Activated naive CD4-positive, alpha-beta T cell treated with anti-CD3 and anti-CD28 coated beads for 36 hours (primary cell): ENCODE measurements at regions of chr6 and their contacts with region 1.

Region 1: GRCh38 chr6:111259089-111259831 is 172.0 kb downstream of the SLC16A10 start:
- DNase-seq: peak; percentile 99
- H3K4me3 Mint-ChIP-seq: peak overlapping the region; percentile 77
- H3K27ac Mint-ChIP-seq: peak overlapping the region; percentile 79
- H3K4me1 Mint-ChIP-seq: peaks cover 34% of the 10 kb centered on the region
- H3K27me3 Mint-ChIP-seq: no peaks in the 10 kb centered on the region

Region 2: DNA sequence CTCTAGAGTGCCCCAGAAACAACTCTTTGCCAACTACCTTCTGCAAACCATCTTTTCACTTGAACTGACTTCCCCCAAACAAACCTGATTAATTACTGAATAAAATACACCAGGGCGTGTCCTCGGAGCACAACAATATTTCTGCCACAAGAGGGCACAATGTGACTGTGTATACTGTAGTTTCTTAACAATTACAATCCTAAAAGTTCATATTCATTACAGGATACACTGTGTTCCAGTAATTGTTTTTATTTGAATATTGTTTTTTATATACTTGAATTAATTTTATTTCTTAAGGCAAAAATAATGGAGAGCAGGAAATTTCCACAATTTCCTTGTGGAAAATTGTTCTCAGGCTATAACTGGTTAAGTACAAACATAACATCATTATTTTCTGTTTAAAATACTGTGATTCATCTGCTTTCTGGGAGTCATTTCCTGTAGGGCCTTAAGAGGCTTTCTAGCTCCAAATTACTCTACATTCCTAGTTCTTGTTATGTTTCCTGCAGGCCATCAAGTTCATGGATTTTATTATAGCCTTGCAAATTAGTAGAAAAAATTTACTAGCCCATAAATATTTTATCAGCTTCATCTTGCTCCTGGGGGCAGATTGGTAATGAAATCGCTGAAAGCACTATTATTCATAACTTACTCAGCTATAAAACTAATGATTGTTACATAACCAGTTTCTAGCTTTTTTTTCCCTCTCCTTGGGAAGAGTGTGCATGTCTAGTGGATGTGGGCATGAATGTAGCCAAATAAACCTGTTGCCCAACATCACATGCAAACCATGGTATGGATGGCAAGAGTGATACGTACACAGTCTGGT is 730.9 kb before region 1 on chr6:
- CTCF ChIA-PET with region 1: no interaction called
- intact Hi-C with region 1: loop called (anchors 2 kb)
- DNase-seq: peak; percentile 75
- H3K4me3 Mint-ChIP-seq: no peak overlapping the region
- H3K27ac Mint-ChIP-seq: no peak overlapping the region
- H3K4me1 Mint-ChIP-seq: no peaks in the 10 kb centered on the region
- H3K27me3 Mint-ChIP-seq: no peaks in the 10 kb centered on the region

Region 3: GRCh38 chr6:111087106-111087835 is 172.0 kb before region 1 on chr6 and contains the start of gene SLC16A10:
- CTCF ChIA-PET with region 1: interaction called, 3 read pairs
- intact Hi-C with region 1: loop called (anchors 1 kb)
- DNase-seq: peak; percentile 74
- H3K4me3 Mint-ChIP-seq: peak within 1 kb of the TSS; percentile 89
- H3K27ac Mint-ChIP-seq: peak within 1 kb of the TSS; percentile 76
- H3K4me1 Mint-ChIP-seq: peaks cover 36% of the 10 kb centered on the region
- H3K27me3 Mint-ChIP-seq: no peaks in the 10 kb centered on the region
- total RNA-seq, gene SLC16A10: 6.6 to 8.1 TPM

Region 4: GRCh38 chr6:111478749-111479148 is 219.5 kb after region 1 on chr6:
- CTCF ChIA-PET with region 1: interaction called, 37 read pairs
- intact Hi-C with region 1: loop called (anchors 1 kb)
- DNase-seq: no peak
- H3K4me3 Mint-ChIP-seq: no peak overlapping the region
- H3K27ac Mint-ChIP-seq: no peak overlapping the region
- H3K4me1 Mint-ChIP-seq: peaks cover 31% of the 10 kb centered on the region
- H3K27me3 Mint-ChIP-seq: no peaks in the 10 kb centered on the region

Region 5: GRCh38 chr6:111573892-111574797 is 314.9 kb after region 1 on chr6:
- CTCF ChIA-PET with region 1: interaction called, 10 read pairs
- intact Hi-C with region 1: no loop called
- DNase-seq: no peak
- H3K4me3 Mint-ChIP-seq: no peak overlapping the region
- H3K27ac Mint-ChIP-seq: peak overlapping the region; percentile 56
- H3K4me1 Mint-ChIP-seq: peaks cover 31% of the 10 kb centered on the region
- H3K27me3 Mint-ChIP-seq: no peaks in the 10 kb centered on the region

Region 6: GRCh38 chr6:111699123-111699522 is 439.9 kb after region 1 on chr6:
- CTCF ChIA-PET with region 1: interaction called, 3 read pairs
- intact Hi-C with region 1: loop called (anchors 5 kb)
- DNase-seq: no peak
- H3K4me3 Mint-ChIP-seq: no peak overlapping the region
- H3K27ac Mint-ChIP-seq: no peak overlapping the region
- H3K4me1 Mint-ChIP-seq: peaks cover 25% of the 10 kb centered on the region
- H3K27me3 Mint-ChIP-seq: no peaks in the 10 kb centered on the region

Region 7: GRCh38 chr6:112029045-112029822 is 770.0 kb after region 1 on chr6:
- CTCF ChIA-PET with region 1: interaction called, 4 read pairs
- intact Hi-C with region 1: loop called (anchors 5 kb)
- DNase-seq: peak; percentile 91
- H3K4me3 Mint-ChIP-seq: no peak overlapping the region
- H3K27ac Mint-ChIP-seq: peak overlapping the region; percentile 90
- H3K4me1 Mint-ChIP-seq: peaks cover 81% of the 10 kb centered on the region
- H3K27me3 Mint-ChIP-seq: no peaks in the 10 kb centered on the region